GM12878 (cell line): ENCODE measurements at regions of chr1 and their contacts with region 1.

Region 1: GRCh38 chr1:203166566-203166940 is 9.1 kb downstream of the MYBPH start:
- DNase-seq: no peak
- ATAC-seq: peak; percentile 95
- H3K4me3 ChIP-seq: no peak overlapping the region
- H3K27ac ChIP-seq: no peak overlapping the region
- H3K4me1 ChIP-seq: no peaks in the 10 kb centered on the region
- H3K27me3 ChIP-seq: peaks cover 0 to 3% of the 10 kb centered on the region in 2 experiments; a peak in 3 of 4 replicates
- CTCF ChIP-seq: peak; percentile 24 to 60 (median 48); a peak in 3 of 6 replicates
- EP300 ChIP-seq: no peak
- POLR2A ChIP-seq: no peak
- RAD21 ChIP-seq: peak; percentile 30; the same call in 1 of the 2 replicates

Region 2: GRCh38 chr1:203046984-203047630 is 119.4 kb before region 1 on chr1:
- CTCF ChIA-PET with region 1: no interaction called
- POLR2A ChIA-PET with region 1: no interaction called
- RAD21 ChIA-PET with region 1: no interaction called
- SMC1A ChIA-PET with region 1: no interaction called
- in situ Hi-C with region 1: no loop called
- intact Hi-C with region 1: no loop called
- DNase-seq: no peak
- ATAC-seq: no peak
- H3K4me3 ChIP-seq: no peak overlapping the region
- H3K27ac ChIP-seq: no peak overlapping the region
- H3K4me1 ChIP-seq: no peaks in the 10 kb centered on the region
- H3K27me3 ChIP-seq: peaks cover 0 to 1% of the 10 kb centered on the region in 2 experiments; a peak in 1 of 4 replicates
- CTCF ChIP-seq: no peak
- EP300 ChIP-seq: no peak
- POLR2A ChIP-seq: no peak
- RAD21 ChIP-seq: no peak

Region 3: GRCh38 chr1:203117611-203118575 is 48.7 kb before region 1 on chr1:
- CTCF ChIA-PET with region 1: interaction called, 22 read pairs
- POLR2A ChIA-PET with region 1: no interaction called
- RAD21 ChIA-PET with region 1: interaction called, 13 read pairs
- SMC1A ChIA-PET with region 1: interaction called, 6 read pairs
- in situ Hi-C with region 1: no loop called
- intact Hi-C with region 1: loop called (anchors 5 kb)
- DNase-seq: no peak
- ATAC-seq: peak; percentile 96
- H3K4me3 ChIP-seq: no peak overlapping the region
- H3K27ac ChIP-seq: no peak overlapping the region
- H3K4me1 ChIP-seq: no peaks in the 10 kb centered on the region
- H3K27me3 ChIP-seq: peaks cover 6 to 9% of the 10 kb centered on the region in 2 experiments; a peak in 3 of 4 replicates
- CTCF ChIP-seq: peak; percentile 28 to 72 (median 64)
- EP300 ChIP-seq: no peak
- POLR2A ChIP-seq: no peak
- RAD21 ChIP-seq: peak; percentile 47